MCF 10A (cell line): ENCODE measurements at regions of chr17 and their contacts with region 1.

Region 1: GRCh38 chr17:6666077-6666521 is 14.5 kb downstream of the C17orf100 start:
- DNase-seq: peak; percentile 86
- H3K4me3 Mint-ChIP-seq: no peak overlapping the region
- H3K27ac Mint-ChIP-seq: no peak overlapping the region
- H3K4me1 Mint-ChIP-seq: peaks cover 30% of the 10 kb centered on the region
- H3K27me3 Mint-ChIP-seq: peaks cover 5% of the 10 kb centered on the region
- CTCF ChIP-seq: peak; percentile 93

Region 2: DNA sequence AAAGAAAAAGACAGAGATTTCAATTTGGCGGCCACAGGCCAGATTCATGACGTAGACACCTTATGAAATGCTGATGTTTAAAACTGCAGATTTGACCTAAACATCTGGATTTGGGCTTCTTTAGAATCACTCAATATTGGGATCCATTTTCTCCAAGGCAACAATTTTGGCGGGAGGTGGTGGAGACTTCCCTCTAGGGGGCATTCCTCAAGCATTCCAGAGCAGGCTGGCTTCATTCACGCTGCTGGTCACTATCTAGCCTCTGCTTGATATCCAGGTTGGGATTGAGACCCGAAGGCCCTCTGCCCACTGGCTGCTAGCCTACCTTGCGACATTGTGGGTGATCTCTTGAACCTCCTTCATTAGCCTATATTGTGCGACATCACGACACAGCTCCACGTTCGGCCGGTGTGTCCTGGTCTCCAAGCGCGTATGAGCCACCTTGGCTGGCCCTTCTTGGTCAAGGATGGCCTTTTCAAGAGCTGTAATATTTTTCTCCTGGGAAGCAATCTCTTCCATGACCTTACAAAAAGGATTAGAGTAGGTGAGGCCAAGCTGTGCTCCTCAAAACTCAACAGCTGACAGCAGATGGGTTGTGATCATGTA is 134.4 kb after region 1 on chr17:
- CTCF ChIA-PET with region 1: interaction called, 11 read pairs
- POLR2A ChIA-PET with region 1: no interaction called
- intact Hi-C with region 1: loop called (anchors 1 kb)
- DNase-seq: peak; percentile 43
- H3K4me3 Mint-ChIP-seq: no peak overlapping the region
- H3K27ac Mint-ChIP-seq: no peak overlapping the region
- H3K4me1 Mint-ChIP-seq: no peaks in the 10 kb centered on the region
- H3K27me3 Mint-ChIP-seq: peaks cover 10% of the 10 kb centered on the region
- CTCF ChIP-seq: peak; percentile 42

Region 3: DNA sequence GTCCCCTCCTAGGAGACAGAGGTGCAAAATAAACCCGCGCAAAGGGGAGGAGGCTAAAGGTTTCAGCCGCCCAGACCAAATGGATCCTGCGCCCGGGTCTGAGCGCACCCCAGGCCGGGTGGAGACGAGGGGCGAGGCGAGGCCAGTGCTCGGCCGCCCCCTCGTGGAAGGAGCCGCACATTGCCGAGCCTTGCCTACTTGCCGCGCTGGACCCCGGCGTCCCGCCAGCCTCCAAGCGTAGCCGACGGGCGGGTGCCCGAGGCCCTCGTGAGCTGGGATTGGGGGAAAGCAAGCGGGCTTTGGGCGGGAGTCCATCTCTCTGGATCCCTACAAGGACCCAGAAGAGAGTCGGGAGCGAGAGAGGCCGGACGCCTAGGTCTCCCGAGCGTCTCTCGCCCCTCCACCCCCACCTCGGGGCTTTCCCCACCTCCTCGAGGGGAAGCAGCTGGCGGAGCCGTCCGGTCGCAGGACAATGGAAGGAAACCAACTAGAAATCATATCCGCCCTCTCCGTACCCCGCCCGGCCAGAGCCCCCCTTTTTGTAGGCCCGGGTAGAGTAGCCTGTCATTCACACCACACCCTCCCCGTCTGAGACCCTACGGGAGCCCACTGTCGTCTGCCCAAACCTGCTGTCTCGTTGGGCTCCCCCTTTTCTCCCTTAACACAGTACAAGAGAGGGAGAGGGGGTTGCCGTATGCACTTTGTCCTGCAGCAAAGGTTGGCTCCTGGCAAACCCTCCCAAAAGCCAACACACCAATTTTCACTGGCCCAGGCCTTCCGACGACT is 356.1 kb after region 1 on chr17:
- CTCF ChIA-PET with region 1: interaction called, 16 read pairs
- POLR2A ChIA-PET with region 1: no interaction called
- intact Hi-C with region 1: loop called (anchors 5 kb)
- DNase-seq: peak; percentile 75
- H3K4me3 Mint-ChIP-seq: no peak overlapping the region
- H3K27ac Mint-ChIP-seq: no peak overlapping the region
- H3K4me1 Mint-ChIP-seq: peaks cover 23% of the 10 kb centered on the region
- H3K27me3 Mint-ChIP-seq: no peaks in the 10 kb centered on the region
- CTCF ChIP-seq: peak; percentile 84